Heart right ventricle (tissue), 16 donors: ENCODE measurements at regions of chr5 and their contacts with region 1.

Region 1: GRCh38 chr5:138542956-138543729 is at the start of gene ETF1:
- DNase-seq: peak; percentile 100
- ATAC-seq: peak; percentile 94 to 97 (median 95)
- H3K4me3 ChIP-seq: peak within 1 kb of the TSS; percentile 73 to 99 (median 94)
- H3K27ac ChIP-seq: peak within 1 kb of the TSS; percentile 91 to 99 (median 98)
- H3K4me1 ChIP-seq: peaks cover 13 to 84% (median 69%) of the 10 kb centered on the region in 9 donors
- H3K27me3 ChIP-seq: no peaks in the 10 kb centered on the region
- CTCF ChIP-seq: peak in 3 of 9 donors; percentile 3 to 28 (median 13)
- total RNA-seq, gene ETF1: 73.5 to 113 (median 83.9) TPM

Region 2: GRCh38 chr5:138449501-138450239 is 93.5 kb before region 1 on chr5:
- intact Hi-C with region 1: loop called in 1 of 10 experiments (anchors 5 kb)
- DNase-seq: peak; percentile 90 to 91
- ATAC-seq: peak; percentile 86 to 96 (median 94)
- H3K4me3 ChIP-seq: peak overlapping the region in 2 of 10 donors; percentile 0 to 8
- H3K27ac ChIP-seq: no peak overlapping the region
- H3K4me1 ChIP-seq: peaks cover 0 to 12% (median 9%) of the 10 kb centered on the region in 9 donors
- H3K27me3 ChIP-seq: no peaks in the 10 kb centered on the region
- CTCF ChIP-seq: peak; percentile 94 to 99 (median 96)

Region 3: GRCh38 chr5:138464008-138464387 is 79.1 kb before region 1 on chr5:
- intact Hi-C with region 1: loop called in 4 of 10 experiments (anchors 2 to 10 kb)
- DNase-seq: peak; percentile 95 to 98
- ATAC-seq: peak; percentile 72 to 89 (median 86)
- H3K4me3 ChIP-seq: peak overlapping the region; percentile 57 to 98 (median 76)
- H3K27ac ChIP-seq: peak overlapping the region; percentile 93 to 99 (median 96)
- H3K4me1 ChIP-seq: peaks cover 2 to 70% (median 67%) of the 10 kb centered on the region in 9 donors
- H3K27me3 ChIP-seq: no peaks in the 10 kb centered on the region
- CTCF ChIP-seq: peak; percentile 84 to 98 (median 94)

Region 4: GRCh38 chr5:138575194-138576015 is 32.3 kb after region 1 on chr5 and contains the start of gene HSPA9:
- intact Hi-C with region 1: loop called in 4 of 10 experiments (anchors 1 to 2 kb)
- DNase-seq: peak; percentile 96 to 99
- ATAC-seq: peak; percentile 96 to 98 (median 97)
- H3K4me3 ChIP-seq: peak within 1 kb of the TSS; percentile 69 to 98 (median 86)
- H3K27ac ChIP-seq: peak within 1 kb of the TSS; percentile 93 to 99 (median 98)
- H3K4me1 ChIP-seq: peaks cover 0 to 38% (median 20%) of the 10 kb centered on the region in 9 donors
- H3K27me3 ChIP-seq: no peaks in the 10 kb centered on the region
- CTCF ChIP-seq: peak in 2 of 9 donors; percentile 9 to 17
- total RNA-seq, gene HSPA9: 246 to 415 (median 324) TPM